IMR-90 (cell line): ENCODE measurements at regions of chr6 and their contacts with region 1.

Region 1: DNA sequence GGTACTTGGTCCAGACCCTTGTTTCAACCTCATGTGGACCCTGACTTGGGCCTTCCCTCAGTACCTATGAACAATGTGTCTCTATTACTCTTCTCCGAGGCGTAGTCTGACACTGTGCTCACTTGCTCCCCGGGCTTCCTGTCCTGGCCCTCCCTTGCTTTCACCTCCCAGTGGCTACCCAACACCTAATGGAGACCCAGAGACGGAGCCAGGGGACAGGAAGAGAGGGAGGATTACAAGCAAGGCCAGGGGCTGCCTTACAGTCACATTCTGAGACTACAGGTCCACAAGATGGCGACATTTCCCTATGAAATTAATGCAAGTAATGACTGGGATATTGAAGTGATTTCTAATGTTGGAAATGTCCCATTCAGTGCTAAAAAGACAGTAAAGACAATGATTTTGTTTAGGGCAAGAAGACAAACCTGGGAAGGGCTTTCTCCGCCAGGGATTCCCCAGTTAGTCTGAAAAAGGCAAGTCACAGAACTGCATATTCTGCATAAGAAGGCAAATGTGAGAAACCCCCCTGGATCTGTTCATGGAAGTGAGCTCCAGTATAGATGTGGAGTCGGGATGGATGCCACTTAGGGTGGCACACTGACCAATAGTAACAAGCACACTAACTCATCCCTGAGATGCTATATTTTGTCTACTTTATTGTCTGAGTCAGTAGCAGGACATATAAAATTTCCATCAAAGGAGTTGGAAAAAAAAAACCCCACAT is 44.0 kb upstream of the ZBTB24 start:
- DNase-seq: peak; percentile 69
- ATAC-seq: peak; percentile 91
- H3K4me3 ChIP-seq: no peak overlapping the region
- H3K27ac ChIP-seq: no peak overlapping the region
- H3K4me1 ChIP-seq: no peaks in the 10 kb centered on the region
- H3K27me3 ChIP-seq: peaks cover 5% of the 10 kb centered on the region; the same call in 1 of the 2 replicates
- CTCF ChIP-seq: peak; percentile 68
- POLR2A ChIP-seq: no peak
- RAD21 ChIP-seq: peak; percentile 76

Region 2: GRCh38 chr6:109690737-109691621 is 163.9 kb after region 1 on chr6 and contains the starts of genes AK9 and FIG4:
- CTCF ChIA-PET with region 1: no interaction called
- POLR2A ChIA-PET with region 1: no interaction called
- dilution Hi-C with region 1: no loop called
- in situ Hi-C with region 1: loop called (anchors 5 kb)
- intact Hi-C with region 1: loop called (anchors 5 kb)
- DNase-seq: peak; percentile 90
- ATAC-seq: peak; percentile 99
- H3K4me3 ChIP-seq: peak within 1 kb of the TSS; percentile 74
- H3K27ac ChIP-seq: peak within 1 kb of the TSS; percentile 41
- H3K4me1 ChIP-seq: no peaks in the 10 kb centered on the region; the same call in 1 of the 2 replicates
- H3K27me3 ChIP-seq: no peaks in the 10 kb centered on the region
- CTCF ChIP-seq: 0 out of 2 replicates have a peak, but pooled peaks have one; percentile 13
- POLR2A ChIP-seq: peak; percentile 58
- RAD21 ChIP-seq: peak; percentile 41
- total RNA-seq, gene AK9: 1.8 and 2.2 TPM in 2 replicates
- total RNA-seq, gene FIG4: 15.4 and 19.7 TPM in 2 replicates

Region 3: DNA sequence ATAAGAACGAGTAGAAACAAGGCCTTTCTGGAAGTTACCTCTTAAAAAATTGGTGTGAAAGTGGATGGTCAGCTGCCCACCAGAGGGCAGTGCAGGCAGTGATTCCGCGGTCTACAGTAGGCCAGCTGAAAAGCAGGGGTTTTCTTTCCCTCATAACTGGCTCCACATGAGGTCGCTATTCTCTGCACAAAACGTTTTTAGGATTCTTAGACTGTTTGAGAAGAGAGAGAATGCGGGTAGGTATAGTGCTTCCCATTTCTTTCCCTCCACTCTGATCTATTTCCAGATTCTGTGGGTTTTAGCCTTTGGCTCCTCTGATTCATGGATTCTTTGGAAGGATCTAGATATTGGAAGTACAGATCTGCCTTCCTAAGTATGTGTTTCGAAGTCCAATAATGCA is 178.2 kb after region 1 on chr6:
- CTCF ChIA-PET with region 1: no interaction called
- POLR2A ChIA-PET with region 1: no interaction called
- dilution Hi-C with region 1: no loop called
- in situ Hi-C with region 1: no loop called
- intact Hi-C with region 1: loop called (anchors 1 kb)
- DNase-seq: peak; percentile 88
- ATAC-seq: peak; percentile 98
- H3K4me3 ChIP-seq: no peak overlapping the region
- H3K27ac ChIP-seq: no peak overlapping the region
- H3K4me1 ChIP-seq: no peaks in the 10 kb centered on the region
- H3K27me3 ChIP-seq: no peaks in the 10 kb centered on the region
- CTCF ChIP-seq: peak; percentile 100; the same call in 1 of the 2 replicates
- POLR2A ChIP-seq: peak; percentile 68; the same call in 1 of the 2 replicates
- RAD21 ChIP-seq: peak; percentile 100

Region 4: GRCh38 chr6:110048221-110048875 is 521.3 kb after region 1 on chr6:
- CTCF ChIA-PET with region 1: no interaction called
- POLR2A ChIA-PET with region 1: no interaction called
- dilution Hi-C with region 1: no loop called
- in situ Hi-C with region 1: loop called (anchors 5 kb)
- intact Hi-C with region 1: loop called (anchors 1 kb)
- DNase-seq: no peak
- ATAC-seq: no peak
- H3K4me3 ChIP-seq: no peak overlapping the region
- H3K27ac ChIP-seq: no peak overlapping the region
- H3K4me1 ChIP-seq: no peaks in the 10 kb centered on the region
- H3K27me3 ChIP-seq: peaks cover 22% of the 10 kb centered on the region
- CTCF ChIP-seq: no peak
- POLR2A ChIP-seq: no peak
- RAD21 ChIP-seq: no peak

Region 5: GRCh38 chr6:110053395-110054240 is 526.6 kb after region 1 on chr6:
- CTCF ChIA-PET with region 1: no interaction called
- POLR2A ChIA-PET with region 1: no interaction called
- dilution Hi-C with region 1: no loop called
- in situ Hi-C with region 1: loop called (anchors 5 kb)
- intact Hi-C with region 1: loop called (anchors 1 kb)
- DNase-seq: peak; percentile 68
- ATAC-seq: peak; percentile 79
- H3K4me3 ChIP-seq: no peak overlapping the region
- H3K27ac ChIP-seq: no peak overlapping the region
- H3K4me1 ChIP-seq: no peaks in the 10 kb centered on the region
- H3K27me3 ChIP-seq: peaks cover 29% of the 10 kb centered on the region
- CTCF ChIP-seq: peak; percentile 91
- POLR2A ChIP-seq: no peak
- RAD21 ChIP-seq: peak; percentile 80

Region 6: DNA sequence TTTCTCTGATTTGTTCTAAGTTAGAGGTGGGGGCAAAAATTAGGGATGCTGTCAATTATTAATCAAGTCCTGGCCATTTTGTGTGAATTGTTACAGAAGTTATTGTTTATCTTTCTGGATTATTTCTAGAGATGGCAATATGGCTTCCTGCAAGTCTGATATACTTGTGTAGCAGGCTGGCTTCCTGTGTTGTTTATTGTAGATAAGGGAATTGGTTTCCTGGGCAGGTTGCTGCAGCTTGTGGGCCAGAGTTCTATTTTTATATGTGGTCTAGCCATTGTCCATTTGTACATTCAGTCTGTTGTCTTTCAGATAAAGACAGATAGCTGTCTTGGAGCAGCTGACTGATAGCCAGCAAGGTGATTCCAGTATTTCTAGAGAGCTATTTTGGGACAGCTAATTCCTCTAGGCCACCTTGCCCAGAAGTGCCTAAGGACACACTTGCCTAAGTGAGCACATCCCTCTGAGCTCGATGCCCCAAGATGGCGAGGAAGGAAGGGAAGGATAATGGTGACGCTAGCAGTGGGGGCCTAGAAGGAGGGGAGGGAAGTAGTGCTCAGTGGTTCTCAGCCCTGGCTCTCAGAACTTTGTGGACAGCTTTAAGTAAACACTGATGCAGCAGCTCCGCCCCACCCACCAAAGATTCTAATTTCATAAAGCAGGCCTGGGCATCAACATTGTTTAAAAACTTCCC is 862.8 kb after region 1 on chr6:
- CTCF ChIA-PET with region 1: no interaction called
- POLR2A ChIA-PET with region 1: no interaction called
- dilution Hi-C with region 1: no loop called
- in situ Hi-C with region 1: loop called (anchors 10 kb)
- intact Hi-C with region 1: loop called (anchors 2 kb)
- DNase-seq: no peak
- ATAC-seq: no peak
- H3K4me3 ChIP-seq: no peak overlapping the region
- H3K27ac ChIP-seq: no peak overlapping the region
- H3K4me1 ChIP-seq: no peaks in the 10 kb centered on the region
- H3K27me3 ChIP-seq: peaks cover 6% of the 10 kb centered on the region
- CTCF ChIP-seq: no peak
- POLR2A ChIP-seq: no peak
- RAD21 ChIP-seq: no peak